K562 (cell line): ENCODE measurements at regions of chr1 and their contacts with region 1.

Region 1: DNA sequence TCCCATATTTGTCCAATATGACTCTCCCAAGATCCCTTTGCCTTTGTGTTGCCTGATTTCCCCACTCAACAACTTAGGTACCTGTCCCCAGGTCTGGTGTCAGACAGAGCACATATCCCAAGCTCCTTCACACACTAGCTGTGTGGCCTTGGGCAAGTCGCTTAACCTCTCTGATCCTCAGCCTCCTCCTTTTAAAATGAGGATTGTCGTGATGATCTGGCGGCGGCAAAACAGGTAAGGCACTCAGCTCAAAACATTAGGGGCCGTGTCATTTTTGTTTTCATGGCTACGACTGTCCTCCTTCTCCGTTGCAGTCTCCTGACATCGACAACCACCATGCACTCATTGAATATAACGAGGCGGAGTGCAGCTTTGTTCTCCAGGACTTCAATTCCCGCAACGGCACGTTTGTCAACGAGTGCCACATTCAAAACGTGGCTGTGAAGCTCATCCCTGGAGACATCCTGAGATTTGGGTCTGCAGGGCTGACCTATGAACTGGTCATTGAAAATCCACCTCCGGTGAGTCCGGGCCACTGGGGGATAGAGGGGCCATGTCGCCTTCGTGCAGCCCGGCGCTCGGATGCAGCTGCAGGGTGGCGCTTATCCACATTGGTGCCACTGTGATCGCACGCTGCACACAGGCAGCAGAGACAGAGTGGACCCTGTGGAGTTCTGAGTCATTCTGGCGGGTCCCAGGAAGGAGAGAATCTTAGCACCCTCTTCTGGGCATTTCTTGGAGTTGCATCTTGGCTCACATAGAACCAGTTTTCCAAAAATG is 25.2 kb downstream of the FHAD1 start:
- DNase-seq: peak; percentile 74 to 84 (median 78)
- ATAC-seq: peak; percentile 97
- H3K4me3 ChIP-seq: no peak overlapping the region
- H3K27ac ChIP-seq: no peak overlapping the region
- H3K4me1 ChIP-seq: peaks cover 0 to 3% of the 10 kb centered on the region in 2 experiments; a peak in 3 of 5 replicates
- H3K27me3 ChIP-seq: peaks cover 20 to 33% of the 10 kb centered on the region in 2 experiments
- CTCF ChIP-seq: peak; percentile 88 to 96 (median 92)
- EP300 ChIP-seq: no peak
- POLR2A ChIP-seq: no peak
- RAD21 ChIP-seq: peak; percentile 97 to 98

Region 2: GRCh38 chr1:15128520-15129313 is 143.5 kb before region 1 on chr1:
- CTCF ChIA-PET with region 1: interaction called, 39 read pairs
- POLR2A ChIA-PET with region 1: interaction called, 3 read pairs
- in situ Hi-C with region 1: loop called (anchors 10 kb)
- intact Hi-C with region 1: loop called (anchors 1 kb)
- DNase-seq: peak; percentile 81 to 86 (median 82)
- ATAC-seq: peak; percentile 100
- H3K4me3 ChIP-seq: no peak overlapping the region
- H3K27ac ChIP-seq: no peak overlapping the region
- H3K4me1 ChIP-seq: peaks cover 0 to 4% of the 10 kb centered on the region in 2 experiments; a peak in 1 of 5 replicates
- H3K27me3 ChIP-seq: peaks cover 4 to 35% of the 10 kb centered on the region in 2 experiments; a peak in 3 of 5 replicates
- CTCF ChIP-seq: peak; percentile 92 to 97 (median 95)
- EP300 ChIP-seq: no peak
- POLR2A ChIP-seq: no peak
- RAD21 ChIP-seq: peak; percentile 92 to 96

Region 3: DNA sequence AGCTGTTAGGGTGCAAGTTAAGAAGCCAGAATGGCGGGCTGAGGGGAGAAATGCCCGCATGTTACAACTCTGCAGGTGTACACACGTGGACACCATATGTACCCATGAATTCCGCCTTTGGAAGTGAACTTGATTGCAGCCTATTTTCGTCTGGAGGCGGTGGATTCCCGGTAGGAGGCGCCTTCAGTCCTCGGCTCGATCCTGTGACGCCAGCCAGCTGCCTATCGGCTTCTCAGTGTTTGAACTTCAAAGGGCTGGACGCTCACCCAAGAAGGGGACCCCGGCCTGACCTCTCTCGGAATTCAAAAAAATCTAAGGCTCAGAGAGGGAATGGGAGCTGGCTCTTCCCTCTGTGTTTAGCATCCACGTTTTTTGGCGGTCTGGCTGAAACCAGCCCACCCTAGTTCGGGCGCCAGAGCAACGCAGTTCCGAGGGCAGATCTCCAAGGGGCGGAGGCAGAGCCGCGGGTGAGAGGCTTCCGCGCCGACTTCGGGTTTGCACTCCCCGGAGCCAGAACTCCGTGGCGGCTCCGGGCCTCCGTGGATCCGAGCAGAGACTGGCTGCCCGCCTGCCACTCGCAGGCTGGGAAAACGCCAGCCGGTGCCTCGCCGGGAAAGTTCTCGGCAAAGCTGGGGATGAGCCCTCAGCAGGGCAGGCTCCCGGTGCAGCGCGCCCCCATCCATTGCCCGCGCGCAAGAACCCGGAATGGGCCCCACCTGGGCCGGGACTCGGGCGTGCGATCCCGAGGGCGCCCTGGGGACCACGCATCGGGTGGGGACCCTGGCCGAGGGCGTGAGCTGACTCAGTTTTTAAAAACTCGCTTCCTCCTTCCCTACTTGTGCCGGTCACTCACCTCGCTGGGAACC is 119.6 kb before region 1 on chr1:
- CTCF ChIA-PET with region 1: interaction called, 13 read pairs
- POLR2A ChIA-PET with region 1: no interaction called
- in situ Hi-C with region 1: no loop called
- intact Hi-C with region 1: loop called (anchors 1 kb)
- DNase-seq: peak; percentile 65 to 81 (median 74)
- ATAC-seq: peak; percentile 84
- H3K4me3 ChIP-seq: peak overlapping the region; percentile 23
- H3K27ac ChIP-seq: no peak overlapping the region
- H3K4me1 ChIP-seq: peaks cover 6 to 26% of the 10 kb centered on the region in 2 experiments
- H3K27me3 ChIP-seq: peaks cover 16 to 82% of the 10 kb centered on the region in 2 experiments; a peak in 4 of 5 replicates
- CTCF ChIP-seq: peak; percentile 73 to 90 (median 82)
- EP300 ChIP-seq: no peak; the same call in 1 of the 2 replicates
- POLR2A ChIP-seq: no peak
- RAD21 ChIP-seq: peak; percentile 83 to 92

Region 4: DNA sequence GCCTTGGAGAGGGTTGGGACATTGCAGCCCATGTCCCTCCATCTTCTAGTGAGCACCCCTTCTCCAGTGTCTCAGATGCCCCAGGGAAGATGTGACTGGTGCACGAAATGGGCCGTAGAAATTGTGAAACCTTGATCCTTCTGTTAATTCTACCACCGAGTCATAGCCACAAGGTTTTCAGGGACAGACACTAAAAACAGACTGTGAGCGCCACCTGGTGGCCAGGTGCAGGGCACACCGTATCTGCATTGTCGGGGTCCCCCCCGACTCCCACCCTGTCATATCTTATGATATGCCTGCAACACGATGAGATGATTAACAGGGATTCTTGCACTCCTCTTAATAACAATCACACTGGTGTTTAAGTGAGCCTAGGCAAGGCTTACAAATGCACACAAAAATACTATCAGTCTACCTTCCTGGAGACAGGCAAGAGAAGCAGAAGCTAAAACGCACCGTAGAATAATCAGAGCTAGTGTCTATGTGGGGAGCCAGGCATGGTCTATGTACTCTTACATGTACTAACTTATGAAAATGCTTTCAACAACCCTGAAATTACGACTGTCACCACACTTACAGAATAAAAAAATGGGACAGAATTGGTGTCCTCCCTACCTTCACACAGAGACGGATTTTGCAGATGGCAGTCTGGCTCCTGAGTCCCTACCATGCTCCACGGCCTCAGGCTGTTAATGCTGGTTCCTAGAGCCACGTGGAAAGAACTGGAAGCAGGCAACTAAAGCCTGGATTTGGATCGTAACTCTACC is 32.7 kb after region 1 on chr1:
- CTCF ChIA-PET with region 1: interaction called, 4 read pairs
- POLR2A ChIA-PET with region 1: interaction called, 3 read pairs
- in situ Hi-C with region 1: no loop called
- intact Hi-C with region 1: loop called (anchors 2 kb)
- DNase-seq: peak; percentile 72 to 82 (median 78)
- ATAC-seq: peak; percentile 92
- H3K4me3 ChIP-seq: no peak overlapping the region
- H3K27ac ChIP-seq: no peak overlapping the region
- H3K4me1 ChIP-seq: no peaks in the 10 kb centered on the region
- H3K27me3 ChIP-seq: peaks cover 19 to 26% of the 10 kb centered on the region in 2 experiments
- CTCF ChIP-seq: peak; percentile 78 to 99 (median 84)
- EP300 ChIP-seq: no peak
- POLR2A ChIP-seq: no peak
- RAD21 ChIP-seq: peak; percentile 50 to 89; a peak in 3 of 4 replicates

Region 5: DNA sequence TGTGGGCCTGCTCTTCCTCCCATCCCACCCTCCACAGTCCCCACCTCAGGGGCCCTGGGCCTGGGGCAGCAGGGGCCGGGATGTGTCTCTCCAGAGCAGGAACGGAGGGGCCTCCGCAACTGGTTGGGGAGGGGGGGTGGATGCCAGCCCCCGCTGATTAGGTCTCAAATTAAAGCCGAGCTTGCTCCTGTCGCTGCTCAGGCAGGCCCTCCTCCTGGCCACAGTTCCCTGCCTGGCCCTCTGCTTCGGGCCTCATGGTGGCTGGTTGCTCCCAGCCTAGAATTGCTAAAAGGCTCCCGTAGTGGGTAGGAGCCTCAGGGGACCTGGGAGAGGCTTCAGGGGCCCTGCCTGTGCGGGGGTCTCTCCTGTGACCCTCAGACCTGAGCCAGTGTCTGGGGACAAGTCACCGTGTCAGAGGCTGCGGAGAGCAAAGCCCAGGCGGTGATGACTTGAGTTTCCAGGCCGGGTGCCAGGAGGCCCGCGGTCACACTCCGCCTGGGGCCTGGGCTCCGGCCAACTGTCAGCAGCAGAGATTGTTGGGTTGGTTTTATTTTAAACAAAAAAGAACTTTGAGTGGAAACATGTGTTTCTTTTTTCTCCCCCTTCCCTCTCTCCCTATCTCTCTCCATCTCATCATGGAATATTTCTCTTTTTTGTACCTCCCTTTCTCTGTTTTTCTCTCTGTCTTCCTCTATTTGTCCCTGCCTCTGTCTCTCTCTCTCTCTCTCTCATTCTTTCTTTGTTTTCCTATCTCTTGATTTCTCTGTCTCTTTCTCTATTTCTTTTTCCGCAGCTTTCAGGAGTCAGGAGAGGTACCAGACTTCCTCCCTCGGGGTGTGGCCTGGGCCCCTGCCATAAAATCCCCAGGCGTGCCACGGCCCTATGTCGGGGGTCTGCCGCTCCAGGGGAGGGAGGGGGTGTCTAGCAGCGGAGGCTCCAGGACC is 903.7 kb after region 1 on chr1:
- CTCF ChIA-PET with region 1: no interaction called
- POLR2A ChIA-PET with region 1: no interaction called
- in situ Hi-C with region 1: no loop called
- intact Hi-C with region 1: no loop called
- DNase-seq: peak; percentile 61 to 69 (median 64)
- ATAC-seq: peak; percentile 64
- H3K4me3 ChIP-seq: no peak overlapping the region
- H3K27ac ChIP-seq: peak overlapping the region; percentile 58; the same call in 1 of the 3 replicates
- H3K4me1 ChIP-seq: peaks cover 37 to 55% of the 10 kb centered on the region in 2 experiments
- H3K27me3 ChIP-seq: no peaks in the 10 kb centered on the region
- CTCF ChIP-seq: no peak
- EP300 ChIP-seq: peak; percentile 24; the same call in 1 of the 2 replicates
- POLR2A ChIP-seq: no peak
- RAD21 ChIP-seq: no peak

Region 6: DNA sequence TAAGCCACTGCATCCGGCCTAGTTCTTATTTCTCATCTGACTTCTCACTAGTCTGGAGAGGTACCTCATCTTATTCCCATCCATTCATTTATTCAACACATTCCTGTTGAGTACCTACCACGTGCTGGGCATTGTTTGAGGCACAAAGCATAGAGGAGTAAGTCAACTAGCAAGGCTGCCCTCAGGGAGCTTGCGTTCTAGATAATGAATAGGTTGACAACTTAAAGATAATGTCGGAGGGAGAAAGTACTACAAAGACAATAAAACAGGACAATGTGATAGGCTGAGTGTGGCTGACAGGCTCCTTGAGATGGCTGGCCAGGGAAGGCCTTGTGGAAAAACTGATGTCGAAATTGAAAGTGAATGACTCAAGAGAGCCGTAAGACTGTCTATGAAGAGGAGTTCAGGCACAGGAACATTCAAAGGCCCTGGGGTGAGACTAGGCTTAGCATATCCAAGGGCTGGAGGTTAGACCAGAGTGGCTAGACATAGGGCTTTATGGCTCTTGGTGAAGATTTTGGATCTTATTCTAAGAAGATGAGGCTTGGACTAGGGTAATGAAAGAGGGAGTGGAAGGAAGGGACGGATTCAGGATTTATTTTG is 1146.7 kb after region 1 on chr1:
- CTCF ChIA-PET with region 1: no interaction called
- POLR2A ChIA-PET with region 1: no interaction called
- in situ Hi-C with region 1: no loop called
- intact Hi-C with region 1: no loop called
- DNase-seq: no peak
- ATAC-seq: no peak
- H3K4me3 ChIP-seq: no peak overlapping the region
- H3K27ac ChIP-seq: no peak overlapping the region
- H3K4me1 ChIP-seq: peaks cover 0 to 16% of the 10 kb centered on the region in 2 experiments; a peak in 3 of 5 replicates
- H3K27me3 ChIP-seq: peaks cover 8 to 22% of the 10 kb centered on the region in 2 experiments; a peak in 4 of 5 replicates
- CTCF ChIP-seq: no peak
- EP300 ChIP-seq: no peak
- POLR2A ChIP-seq: no peak
- RAD21 ChIP-seq: no peak